GM18951 (cell line): ENCODE measurements at regions of chr3 and their contacts with region 1.

Region 1: GRCh38 chr3:187738331-187739093 is 6.8 kb downstream of the BCL6 start:
- POLR2A ChIP-seq: no peak

Region 2: DNA sequence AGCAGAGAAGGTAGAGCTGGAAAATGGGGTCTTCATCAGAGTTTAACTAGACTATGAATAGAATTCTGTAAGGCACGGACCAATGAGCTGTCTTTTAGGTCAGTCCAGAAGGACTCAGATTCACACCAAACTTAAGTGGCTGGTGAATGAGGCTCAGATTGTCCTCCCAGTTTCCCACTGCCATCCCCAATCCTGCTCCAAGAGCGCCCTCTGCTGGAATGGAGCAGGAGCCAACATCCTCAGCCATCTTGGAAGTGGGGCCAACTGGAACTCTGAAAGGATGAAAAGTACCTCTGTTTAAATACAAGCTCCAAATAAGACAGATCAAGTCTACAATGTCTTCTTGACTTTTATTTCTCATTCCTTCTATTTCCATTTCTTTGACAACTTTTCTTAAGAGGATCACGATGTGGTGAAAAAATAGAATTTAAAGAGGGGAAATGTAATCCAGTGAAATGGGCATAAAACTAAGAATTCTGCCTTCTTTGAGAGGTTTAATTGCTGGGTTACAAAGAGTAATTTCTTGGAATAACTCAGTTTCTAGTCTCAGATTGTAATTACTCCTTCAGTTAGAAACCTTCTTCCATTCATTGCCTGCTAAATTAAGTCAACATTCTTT is 1216.2 kb after region 1 on chr3:
- in situ Hi-C with region 1: loop called (anchors 10 kb)
- POLR2A ChIP-seq: no peak